Right cardiac atrium (tissue), 5 donors: ENCODE measurements at regions of chr16 and their contacts with region 1.

Region 1: DNA sequence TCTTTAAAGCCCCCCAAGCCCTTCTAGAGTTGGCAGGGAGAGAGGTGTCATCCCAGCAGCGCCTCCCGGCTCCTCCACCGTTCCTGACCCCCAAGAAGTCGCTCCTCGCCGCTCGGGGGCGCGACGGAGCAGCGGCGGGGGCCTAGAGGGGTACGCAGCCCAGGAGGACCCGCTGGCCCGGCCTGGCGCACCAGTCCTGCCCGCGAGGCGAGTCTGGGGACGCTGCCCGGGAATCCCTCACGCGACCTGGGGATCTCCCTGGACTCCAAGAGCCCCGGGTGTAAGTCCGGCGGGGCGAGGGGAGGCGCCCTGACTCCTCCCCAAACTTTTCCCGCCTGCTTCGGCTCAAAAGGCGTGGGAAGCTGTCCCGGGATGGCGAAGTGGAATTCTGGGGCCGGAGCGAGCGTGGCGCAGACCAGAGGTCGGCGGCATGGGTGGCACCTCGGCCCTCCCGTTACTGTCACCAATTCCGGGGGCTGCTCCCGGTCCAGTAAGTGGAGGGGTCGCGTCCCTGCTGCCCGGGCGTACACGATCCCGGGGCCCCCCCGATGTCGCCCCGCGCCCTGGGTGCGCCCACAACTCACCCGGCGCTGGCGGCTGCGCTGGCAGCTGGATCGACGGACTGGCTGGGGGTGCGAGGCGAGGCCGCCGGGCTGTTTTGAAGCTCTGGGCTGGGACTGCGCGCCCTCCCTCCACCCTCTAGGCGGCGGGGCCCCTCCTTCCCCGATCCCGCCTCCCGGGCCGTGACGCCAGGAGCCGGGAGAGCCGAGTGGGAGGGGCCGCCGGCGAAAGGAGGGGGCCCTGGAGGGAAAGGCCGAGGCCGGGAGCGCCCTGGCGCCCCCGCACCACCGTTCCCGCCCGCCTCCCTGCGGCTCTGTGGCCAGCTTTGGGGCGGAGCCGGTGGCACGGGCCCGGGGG is at the start of gene EMP2:
- DNase-seq: peak; percentile 88 to 95 (median 94)
- ATAC-seq: peak; percentile 93 to 94
- H3K4me3 ChIP-seq: peak within 1 kb of the TSS; percentile 63
- H3K27ac ChIP-seq: peak within 1 kb of the TSS; percentile 85
- H3K4me1 ChIP-seq: peaks cover 15% of the 10 kb centered on the region
- H3K27me3 ChIP-seq: no peaks in the 10 kb centered on the region
- total RNA-seq, gene EMP2: 66.0 to 85.0 (median 74.3) TPM

Region 2: GRCh38 chr16:10521681-10522274 is 58.4 kb before region 1 on chr16:
- intact Hi-C with region 1: loop called in 2 of 4 experiments (anchors 5 to 10 kb)
- DNase-seq: peak in 2 of 3 donors; percentile 32 to 70
- ATAC-seq: peak; percentile 69 to 71
- H3K4me3 ChIP-seq: no peak overlapping the region
- H3K27ac ChIP-seq: no peak overlapping the region
- H3K4me1 ChIP-seq: no peaks in the 10 kb centered on the region
- H3K27me3 ChIP-seq: no peaks in the 10 kb centered on the region